Transverse colon (tissue), 4 donors: ENCODE measurements at regions of chr7 and their contacts with region 1.

Region 1: DNA sequence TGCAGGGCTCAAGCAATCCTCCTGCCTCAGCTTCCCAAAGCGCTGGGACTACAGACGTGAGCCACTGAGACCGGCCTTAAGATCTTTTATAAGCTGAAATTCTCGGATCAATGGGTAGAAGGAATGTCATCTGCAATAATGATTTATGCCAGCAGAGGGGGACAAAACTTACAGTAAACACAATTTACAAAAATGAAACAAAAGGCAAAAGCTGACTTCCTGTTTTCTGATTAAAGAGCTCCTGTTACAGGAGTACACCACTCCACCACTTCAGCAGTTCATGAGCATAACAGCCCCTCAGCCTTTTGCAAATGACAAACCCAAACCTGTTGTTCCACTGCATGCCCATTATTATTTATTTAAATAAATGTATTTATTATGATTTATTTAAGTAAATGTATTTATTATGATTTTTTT is 88.5 kb upstream of the ATP6V0A4 start:
- DNase-seq: no peak
- H3K4me3 ChIP-seq: no peak overlapping the region
- H3K27ac ChIP-seq: peak overlapping the region in 1 of 4 donors; percentile 16
- H3K4me1 ChIP-seq: peaks cover 0 to 10% (median 0%) of the 10 kb centered on the region in 4 donors
- H3K27me3 ChIP-seq: no peaks in the 10 kb centered on the region
- CTCF ChIP-seq: peak; percentile 63 to 74 (median 68)
- EP300 ChIP-seq: no peak
- POLR2A ChIP-seq: no peak

Region 2: DNA sequence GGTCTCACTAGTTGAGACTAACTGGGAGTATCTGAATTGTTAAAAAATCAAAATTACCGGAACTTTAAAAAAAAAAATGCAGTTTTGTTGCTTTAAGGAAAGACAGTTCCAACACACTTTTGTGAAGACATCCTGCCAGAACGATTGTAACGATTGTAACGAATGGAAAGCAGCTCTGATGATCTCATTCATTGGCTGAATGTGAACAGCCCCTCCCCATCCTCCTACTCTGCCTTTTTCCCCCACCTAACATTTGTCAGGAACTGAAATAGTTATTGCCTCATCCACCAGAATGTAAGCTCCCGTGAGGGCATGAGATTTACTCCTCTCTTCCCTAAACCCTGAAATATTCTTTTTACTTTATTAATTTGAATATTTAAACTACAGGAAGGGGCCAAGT is 172.4 kb after region 1 on chr7:
- in situ Hi-C with region 1: loop called in 1 of 4 experiments (anchors 25 kb)
- intact Hi-C with region 1: no loop called
- DNase-seq: no peak
- H3K4me3 ChIP-seq: no peak overlapping the region
- H3K27ac ChIP-seq: no peak overlapping the region
- H3K4me1 ChIP-seq: no peaks in the 10 kb centered on the region
- H3K27me3 ChIP-seq: no peaks in the 10 kb centered on the region
- CTCF ChIP-seq: no peak
- EP300 ChIP-seq: no peak
- POLR2A ChIP-seq: no peak

Region 3: GRCh38 chr7:139075031-139075652 is 188.6 kb after region 1 on chr7:
- in situ Hi-C with region 1: loop called in 2 of 4 experiments (anchors 25 kb)
- intact Hi-C with region 1: no loop called
- DNase-seq: peak; percentile 66
- H3K4me3 ChIP-seq: no peak overlapping the region
- H3K27ac ChIP-seq: peak overlapping the region in 2 of 4 donors; percentile 17 to 37
- H3K4me1 ChIP-seq: peaks cover 0 to 4% (median 0%) of the 10 kb centered on the region in 4 donors
- H3K27me3 ChIP-seq: no peaks in the 10 kb centered on the region
- CTCF ChIP-seq: peak; percentile 71 to 91 (median 79)
- EP300 ChIP-seq: no peak
- POLR2A ChIP-seq: no peak